ENCODE measurements at regions of chr14 and their contacts with region 1.

Region 1: GRCh38 chr14:67666750-67667449 is 7.5 kb downstream of the VTI1B start:
- DNase-seq: peak; percentile 36 to 53 (median 51)
- H3K4me3 ChIP-seq: no peak overlapping the region
- H3K4me3 Mint-ChIP-seq: no peak overlapping the region
- H3K27ac ChIP-seq: peak overlapping the region in 1 of 2 donors; percentile 39
- H3K27ac Mint-ChIP-seq: peak overlapping the region in 6 of 7 donors; percentile 58 to 84 (median 74)
- H3K4me1 ChIP-seq: peaks cover 10 to 13% of the 10 kb centered on the region in 2 donors
- H3K4me1 Mint-ChIP-seq: peaks cover 33% of the 10 kb centered on the region
- H3K27me3 ChIP-seq: no peaks in the 10 kb centered on the region
- H3K27me3 Mint-ChIP-seq: no peaks in the 10 kb centered on the region
- CTCF ChIP-seq: peak; percentile 74

Region 2: GRCh38 chr14:67285876-67286452 is 380.9 kb before region 1 on chr14:
- intact Hi-C with region 1: no loop called
- DNase-seq: peak in 2 of 3 donors; percentile 7 to 38
- H3K4me3 ChIP-seq: no peak overlapping the region
- H3K4me3 Mint-ChIP-seq: no peak overlapping the region
- H3K27ac ChIP-seq: no peak overlapping the region
- H3K27ac Mint-ChIP-seq: no peak overlapping the region
- H3K4me1 ChIP-seq: no peaks in the 10 kb centered on the region
- H3K4me1 Mint-ChIP-seq: no peaks in the 10 kb centered on the region
- H3K27me3 ChIP-seq: no peaks in the 10 kb centered on the region
- H3K27me3 Mint-ChIP-seq: peaks cover 0 to 2% (median 0%) of the 10 kb centered on the region in 3 donors
- CTCF ChIP-seq: peak; percentile 76

Region 3: DNA sequence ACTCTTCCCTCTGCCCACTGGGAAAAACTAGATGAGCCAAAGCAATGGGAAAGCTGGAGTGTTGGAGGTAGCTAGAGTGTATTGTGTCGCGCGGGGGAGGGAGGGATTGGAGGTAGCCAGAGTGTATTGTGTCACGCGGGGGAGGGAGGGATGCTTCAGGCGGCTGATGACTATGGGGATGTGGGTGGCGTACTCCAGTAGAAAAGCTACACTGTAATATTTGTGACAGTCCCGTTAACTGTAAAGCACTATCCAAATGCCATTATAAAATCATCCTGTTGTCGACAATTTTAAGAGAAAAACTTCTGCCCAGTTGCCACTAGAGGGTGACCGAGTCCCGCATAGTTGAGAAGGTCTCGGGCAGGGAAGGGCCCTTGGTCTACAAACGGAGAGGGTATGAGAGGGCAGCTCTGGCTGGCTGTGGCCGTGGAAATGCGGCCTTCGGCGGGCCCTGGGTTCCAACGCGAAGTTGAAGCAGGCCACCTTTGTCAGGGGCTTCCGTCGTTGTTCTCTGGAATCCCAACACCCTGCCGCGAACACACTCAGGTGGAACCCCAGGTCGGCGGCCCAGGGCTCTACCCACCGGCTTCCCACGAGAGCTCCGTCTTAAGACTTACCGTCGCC is 239.8 kb before region 1 on chr14:
- intact Hi-C with region 1: loop called in 1 of 2 experiments (anchors 5 kb)
- DNase-seq: peak; percentile 54 to 63 (median 56)
- H3K4me3 ChIP-seq: no peak overlapping the region
- H3K4me3 Mint-ChIP-seq: no peak overlapping the region
- H3K27ac ChIP-seq: no peak overlapping the region
- H3K27ac Mint-ChIP-seq: peak overlapping the region in 1 of 7 donors; percentile 66
- H3K4me1 ChIP-seq: peaks cover 5 to 9% of the 10 kb centered on the region in 2 donors
- H3K4me1 Mint-ChIP-seq: peaks cover 14% of the 10 kb centered on the region
- H3K27me3 ChIP-seq: peaks cover 6 to 15% of the 10 kb centered on the region in 2 donors
- H3K27me3 Mint-ChIP-seq: peaks cover 20 to 44% (median 31%) of the 10 kb centered on the region in 3 donors
- CTCF ChIP-seq: peak; percentile 86

Region 4: GRCh38 chr14:67583711-67584644 is 82.9 kb before region 1 on chr14:
- intact Hi-C with region 1: loop called in 1 of 2 experiments (anchors 5 kb)
- DNase-seq: peak; percentile 25 to 49 (median 48)
- H3K4me3 ChIP-seq: no peak overlapping the region
- H3K4me3 Mint-ChIP-seq: no peak overlapping the region
- H3K27ac ChIP-seq: no peak overlapping the region
- H3K27ac Mint-ChIP-seq: no peak overlapping the region
- H3K4me1 ChIP-seq: no peaks in the 10 kb centered on the region
- H3K4me1 Mint-ChIP-seq: peaks cover 2% of the 10 kb centered on the region
- H3K27me3 ChIP-seq: no peaks in the 10 kb centered on the region
- H3K27me3 Mint-ChIP-seq: peaks cover 0 to 2% (median 0%) of the 10 kb centered on the region in 3 donors
- CTCF ChIP-seq: peak; percentile 74

Region 5: GRCh38 chr14:67619446-67620216 is 47.3 kb before region 1 on chr14 and contains the start of gene ARG2:
- intact Hi-C with region 1: loop called (anchors 5 to 10 kb)
- DNase-seq: peak; percentile 93 to 98 (median 94)
- H3K4me3 ChIP-seq: peak within 1 kb of the TSS; percentile 51 to 89 (median 75)
- H3K4me3 Mint-ChIP-seq: peak within 1 kb of the TSS; percentile 85
- H3K27ac ChIP-seq: peak within 1 kb of the TSS in 1 of 2 donors; percentile 73
- H3K27ac Mint-ChIP-seq: peak within 1 kb of the TSS; percentile 74 to 91 (median 83)
- H3K4me1 ChIP-seq: peaks cover 16 to 20% of the 10 kb centered on the region in 2 donors
- H3K4me1 Mint-ChIP-seq: peaks cover 24% of the 10 kb centered on the region
- H3K27me3 ChIP-seq: peaks cover 4 to 10% of the 10 kb centered on the region in 2 donors
- H3K27me3 Mint-ChIP-seq: peaks cover 13 to 27% (median 23%) of the 10 kb centered on the region in 3 donors
- CTCF ChIP-seq: no peak
- polyA plus RNA-seq, gene ARG2: 0.13 to 0.46 (median 0.33) TPM

Measured in CD14-positive monocyte (primary cell).